ENCODE measurements at regions of chr5 and their contacts with region 1.

Region 1: DNA sequence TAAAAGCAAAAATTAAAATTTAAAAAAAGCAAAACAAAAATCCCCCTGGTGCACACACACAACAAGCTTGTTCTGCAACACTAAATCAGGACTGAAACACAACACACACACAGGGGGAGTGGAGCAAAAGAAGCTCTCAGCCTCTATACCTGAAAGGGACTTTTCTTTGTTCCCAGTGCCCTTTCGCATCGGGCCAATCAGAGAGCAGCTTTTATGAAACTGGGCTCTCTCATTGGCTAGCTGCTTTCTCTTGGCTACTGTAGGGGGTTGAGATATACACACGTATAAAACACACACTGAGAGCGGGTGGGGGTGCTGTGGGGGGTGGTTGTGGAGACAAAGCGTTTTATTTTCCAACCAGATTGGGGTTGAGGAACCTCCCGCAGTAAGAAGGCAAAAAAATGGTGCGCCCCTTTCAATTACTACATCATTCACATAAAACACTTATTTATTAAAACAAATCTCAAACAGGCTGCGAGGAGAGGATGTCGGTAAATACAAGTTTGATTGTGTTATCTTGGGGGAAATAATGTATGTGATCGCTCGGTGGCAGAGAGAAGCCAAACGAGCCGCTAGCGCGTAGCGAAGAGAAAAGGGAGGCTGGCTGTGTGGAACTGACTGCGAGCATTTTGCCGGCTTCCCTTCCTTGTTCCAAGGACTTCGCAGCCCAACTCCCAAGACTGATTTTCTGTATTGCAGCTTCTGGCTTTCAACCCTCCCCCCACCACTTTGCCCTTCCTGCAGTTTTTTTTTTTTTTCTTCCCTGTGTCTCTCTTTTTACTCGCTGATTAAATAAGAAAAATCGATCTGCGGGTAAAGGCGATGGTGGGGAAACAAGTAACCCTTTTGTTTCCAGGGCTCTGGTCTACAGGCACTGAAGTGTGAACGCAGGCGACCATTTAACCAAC is 2.5 kb upstream of the ZNF608 start:
- DNase-seq: peak; percentile 89 to 95
- H3K4me3 ChIP-seq: peak overlapping the region; percentile 62
- H3K4me3 Mint-ChIP-seq: no peak overlapping the region
- H3K27ac Mint-ChIP-seq: peak overlapping the region; percentile 93
- H3K4me1 ChIP-seq: peaks cover 48% of the 10 kb centered on the region
- H3K4me1 Mint-ChIP-seq: peaks cover 12% of the 10 kb centered on the region
- H3K27me3 ChIP-seq: no peaks in the 10 kb centered on the region
- H3K27me3 Mint-ChIP-seq: no peaks in the 10 kb centered on the region
- CTCF ChIP-seq: no peak

Region 2: GRCh38 chr5:124524552-124525232 is 224.2 kb before region 1 on chr5:
- CTCF ChIA-PET with region 1: no interaction called
- POLR2A ChIA-PET with region 1: interaction called, 5 read pairs
- intact Hi-C with region 1: loop called (anchors 5 kb)
- DNase-seq: no peak
- H3K4me3 ChIP-seq: no peak overlapping the region
- H3K4me3 Mint-ChIP-seq: no peak overlapping the region
- H3K27ac Mint-ChIP-seq: peak overlapping the region; percentile 14
- H3K4me1 ChIP-seq: peaks cover 26% of the 10 kb centered on the region
- H3K4me1 Mint-ChIP-seq: peaks cover 25% of the 10 kb centered on the region
- H3K27me3 ChIP-seq: no peaks in the 10 kb centered on the region
- H3K27me3 Mint-ChIP-seq: no peaks in the 10 kb centered on the region
- CTCF ChIP-seq: no peak

Region 3: GRCh38 chr5:124649491-124650146 is 99.3 kb before region 1 on chr5:
- CTCF ChIA-PET with region 1: interaction called, 14 read pairs
- POLR2A ChIA-PET with region 1: no interaction called
- intact Hi-C with region 1: no loop called
- DNase-seq: no peak
- H3K4me3 ChIP-seq: no peak overlapping the region
- H3K4me3 Mint-ChIP-seq: no peak overlapping the region
- H3K27ac Mint-ChIP-seq: no peak overlapping the region
- H3K4me1 ChIP-seq: peaks cover 33% of the 10 kb centered on the region
- H3K4me1 Mint-ChIP-seq: peaks cover 9% of the 10 kb centered on the region
- H3K27me3 ChIP-seq: no peaks in the 10 kb centered on the region
- H3K27me3 Mint-ChIP-seq: no peaks in the 10 kb centered on the region
- CTCF ChIP-seq: no peak

Region 4: GRCh38 chr5:124888050-124888506 is 139.1 kb after region 1 on chr5:
- CTCF ChIA-PET with region 1: interaction called, 3 read pairs
- POLR2A ChIA-PET with region 1: interaction called, 13 read pairs
- intact Hi-C with region 1: loop called (anchors 5 kb)
- DNase-seq: peak; percentile 65 to 75
- H3K4me3 ChIP-seq: no peak overlapping the region
- H3K4me3 Mint-ChIP-seq: peak overlapping the region; percentile 66
- H3K27ac Mint-ChIP-seq: peak overlapping the region; percentile 75
- H3K4me1 ChIP-seq: peaks cover 23% of the 10 kb centered on the region
- H3K4me1 Mint-ChIP-seq: peaks cover 9% of the 10 kb centered on the region
- H3K27me3 ChIP-seq: no peaks in the 10 kb centered on the region
- H3K27me3 Mint-ChIP-seq: no peaks in the 10 kb centered on the region
- CTCF ChIP-seq: peak; percentile 35 to 69

Region 5: DNA sequence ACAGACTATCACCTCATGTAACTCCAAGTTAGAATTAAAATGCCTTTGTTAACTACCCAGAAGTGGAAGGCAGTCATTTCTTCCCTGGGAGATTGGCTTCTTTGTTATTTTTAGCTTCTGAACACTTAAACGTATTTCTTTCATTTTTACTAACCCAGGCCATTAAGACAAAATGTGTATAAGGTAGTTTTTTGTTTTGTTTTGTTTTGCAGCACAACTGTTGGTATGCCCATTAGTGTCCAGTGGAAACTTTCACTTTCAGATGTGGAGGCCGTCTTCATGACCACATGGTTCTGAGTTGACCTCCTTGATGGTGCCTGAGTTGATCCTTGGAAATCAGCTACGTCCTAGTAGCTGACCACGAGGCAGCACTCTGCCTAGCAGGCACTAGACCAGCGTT is 262.1 kb after region 1 on chr5:
- CTCF ChIA-PET with region 1: interaction called, 3 read pairs
- POLR2A ChIA-PET with region 1: interaction called, 10 read pairs
- intact Hi-C with region 1: loop called (anchors 5 kb)
- DNase-seq: no peak
- H3K4me3 ChIP-seq: no peak overlapping the region
- H3K4me3 Mint-ChIP-seq: peak overlapping the region; percentile 36
- H3K27ac Mint-ChIP-seq: peak overlapping the region; percentile 83
- H3K4me1 ChIP-seq: peaks cover 60% of the 10 kb centered on the region
- H3K4me1 Mint-ChIP-seq: peaks cover 20% of the 10 kb centered on the region
- H3K27me3 ChIP-seq: no peaks in the 10 kb centered on the region
- H3K27me3 Mint-ChIP-seq: no peaks in the 10 kb centered on the region
- CTCF ChIP-seq: peak in 1 of 2 experiments; percentile 4